Mammary epithelial cell (primary cell): ENCODE measurements at regions of chr12 and their contacts with region 1.

Region 1: DNA sequence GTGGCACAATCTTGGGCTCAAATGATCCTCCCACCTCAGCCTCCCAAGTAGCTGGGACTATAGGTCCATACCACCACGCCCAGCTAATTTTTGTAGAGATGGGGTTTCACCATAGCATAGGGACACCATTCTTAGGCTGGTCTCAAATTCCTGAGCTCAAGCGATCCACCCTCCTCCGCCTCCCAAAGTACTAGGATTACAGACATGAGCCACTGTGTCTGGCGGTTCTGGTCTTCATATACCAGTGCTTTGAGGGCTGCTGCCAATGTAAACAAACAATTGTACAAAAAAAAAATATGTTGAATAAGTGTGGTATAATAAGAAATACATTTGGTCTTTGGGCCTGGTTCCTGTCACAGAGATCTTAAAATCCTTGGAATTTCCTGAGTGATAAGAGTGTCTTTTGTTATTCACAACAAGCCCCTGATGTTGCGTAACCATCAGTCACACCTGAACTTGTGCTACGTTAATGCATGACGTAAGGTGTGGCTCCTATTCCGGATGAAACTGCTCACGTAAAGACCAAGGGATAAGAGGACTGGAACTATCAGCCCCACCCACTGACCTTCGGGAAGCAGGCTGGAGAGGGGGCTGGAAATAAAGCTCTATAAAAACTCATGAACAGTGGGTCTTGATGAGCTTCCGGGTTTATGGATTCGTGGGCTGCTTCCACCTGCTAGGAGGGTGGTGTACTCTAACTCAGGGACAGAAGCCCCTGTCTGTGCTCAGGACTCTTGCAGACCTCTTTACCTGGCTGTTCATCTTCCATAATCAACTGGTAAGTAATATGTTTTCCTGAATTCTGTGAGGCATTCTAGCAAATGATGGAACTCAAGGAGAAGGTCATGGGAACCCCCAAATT is 16.5 kb upstream of the RIMKLB start:
- DNase-seq: peak; percentile 94
- H3K4me3 ChIP-seq: peak overlapping the region in 1 of 3 experiments; percentile 17
- H3K27ac ChIP-seq: peak overlapping the region; percentile 78
- H3K4me1 ChIP-seq: peaks cover 30% of the 10 kb centered on the region
- H3K27me3 ChIP-seq: no peaks in the 10 kb centered on the region
- CTCF ChIP-seq: no peak

Region 2: DNA sequence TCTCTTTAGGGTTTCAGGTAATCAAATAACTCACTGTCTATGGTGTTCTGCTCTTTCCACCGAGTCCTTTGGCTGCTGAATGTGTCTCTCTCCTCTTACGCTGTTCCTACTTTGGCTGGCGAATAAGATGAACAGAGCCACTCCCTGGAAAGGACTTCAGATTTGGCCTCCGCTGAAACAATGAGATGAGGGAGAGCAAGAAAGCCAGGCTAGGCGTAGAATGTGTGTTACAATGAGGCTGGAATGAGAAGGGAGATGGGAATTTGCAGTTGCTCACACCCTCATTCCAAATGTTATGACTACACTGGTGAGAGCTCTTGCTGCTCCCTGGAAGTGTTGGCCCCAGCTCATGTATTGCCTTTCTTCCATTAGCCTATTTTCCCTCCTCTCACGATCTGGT is 18.7 kb before region 1 on chr12 and contains the start of gene MFAP5:
- CTCF ChIA-PET with region 1: no interaction called
- dilution Hi-C with region 1: no loop called
- in situ Hi-C with region 1: no loop called
- intact Hi-C with region 1: loop called (anchors 1 kb)
- DNase-seq: no peak
- H3K4me3 ChIP-seq: no peak within 1 kb of the TSS
- H3K27ac ChIP-seq: no peak within 1 kb of the TSS
- H3K4me1 ChIP-seq: peaks cover 21% of the 10 kb centered on the region
- H3K27me3 ChIP-seq: no peaks in the 10 kb centered on the region
- CTCF ChIP-seq: no peak
- total RNA-seq, gene MFAP5: 2.4 to 7.5 TPM

Region 3: GRCh38 chr12:8742501-8742900 is 61.2 kb after region 1 on chr12:
- CTCF ChIA-PET with region 1: no interaction called
- dilution Hi-C with region 1: no loop called
- in situ Hi-C with region 1: no loop called
- intact Hi-C with region 1: no loop called
- DNase-seq: peak; percentile 52
- H3K4me3 ChIP-seq: no peak overlapping the region
- H3K27ac ChIP-seq: no peak overlapping the region
- H3K4me1 ChIP-seq: peaks cover 8% of the 10 kb centered on the region
- H3K27me3 ChIP-seq: no peaks in the 10 kb centered on the region
- CTCF ChIP-seq: no peak

Region 4: GRCh38 chr12:8780389-8780788 is 99.1 kb after region 1 on chr12:
- CTCF ChIA-PET with region 1: no interaction called
- dilution Hi-C with region 1: no loop called
- in situ Hi-C with region 1: no loop called
- intact Hi-C with region 1: loop called (anchors 5 kb)
- DNase-seq: peak; percentile 40
- H3K4me3 ChIP-seq: no peak overlapping the region
- H3K27ac ChIP-seq: no peak overlapping the region
- H3K4me1 ChIP-seq: no peaks in the 10 kb centered on the region
- H3K27me3 ChIP-seq: no peaks in the 10 kb centered on the region
- CTCF ChIP-seq: peak; percentile 39 to 71

Region 5: GRCh38 chr12:8860165-8860961 is 179.1 kb after region 1 on chr12:
- CTCF ChIA-PET with region 1: no interaction called
- dilution Hi-C with region 1: no loop called
- in situ Hi-C with region 1: no loop called
- intact Hi-C with region 1: loop called (anchors 1 kb)
- DNase-seq: peak; percentile 50
- H3K4me3 ChIP-seq: no peak overlapping the region
- H3K27ac ChIP-seq: no peak overlapping the region
- H3K4me1 ChIP-seq: no peaks in the 10 kb centered on the region
- H3K27me3 ChIP-seq: no peaks in the 10 kb centered on the region
- CTCF ChIP-seq: peak; percentile 82 to 88

Region 6: GRCh38 chr12:8914716-8915526 is 233.6 kb after region 1 on chr12:
- CTCF ChIA-PET with region 1: no interaction called
- dilution Hi-C with region 1: no loop called
- in situ Hi-C with region 1: no loop called
- intact Hi-C with region 1: loop called (anchors 5 kb)
- DNase-seq: peak; percentile 75
- H3K4me3 ChIP-seq: peak overlapping the region; percentile 43 to 71 (median 69)
- H3K27ac ChIP-seq: no peak overlapping the region
- H3K4me1 ChIP-seq: peaks cover 25% of the 10 kb centered on the region
- H3K27me3 ChIP-seq: no peaks in the 10 kb centered on the region
- CTCF ChIP-seq: no peak

Region 7: GRCh38 chr12:9039397-9039977 is 358.2 kb after region 1 on chr12:
- CTCF ChIA-PET with region 1: no interaction called
- dilution Hi-C with region 1: no loop called
- in situ Hi-C with region 1: no loop called
- intact Hi-C with region 1: loop called (anchors 1 kb)
- DNase-seq: peak; percentile 36
- H3K4me3 ChIP-seq: no peak overlapping the region
- H3K27ac ChIP-seq: no peak overlapping the region
- H3K4me1 ChIP-seq: no peaks in the 10 kb centered on the region
- H3K27me3 ChIP-seq: peaks cover 2% of the 10 kb centered on the region
- CTCF ChIP-seq: peak; percentile 64 to 88